Panc1 (cell line): ENCODE measurements at regions of chr13 and their contacts with region 1.

Region 1: GRCh38 chr13:61286148-61286745 is 129.4 kb downstream of the PCDH20 start:
- DNase-seq: no peak
- ATAC-seq: no peak
- H3K4me3 ChIP-seq: no peak overlapping the region
- H3K27ac ChIP-seq: no peak overlapping the region
- H3K4me1 ChIP-seq: no peaks in the 10 kb centered on the region
- H3K27me3 ChIP-seq: no peaks in the 10 kb centered on the region
- CTCF ChIP-seq: peak; percentile 69

Region 2: GRCh38 chr13:61358599-61358998 is 72.4 kb after region 1 on chr13:
- CTCF ChIA-PET with region 1: no interaction called
- POLR2A ChIA-PET with region 1: no interaction called
- in situ Hi-C with region 1: no loop called
- intact Hi-C with region 1: no loop called
- DNase-seq: no peak
- ATAC-seq: no peak
- H3K4me3 ChIP-seq: no peak overlapping the region
- H3K27ac ChIP-seq: no peak overlapping the region
- H3K4me1 ChIP-seq: no peaks in the 10 kb centered on the region
- H3K27me3 ChIP-seq: no peaks in the 10 kb centered on the region
- CTCF ChIP-seq: no peak

Region 3: DNA sequence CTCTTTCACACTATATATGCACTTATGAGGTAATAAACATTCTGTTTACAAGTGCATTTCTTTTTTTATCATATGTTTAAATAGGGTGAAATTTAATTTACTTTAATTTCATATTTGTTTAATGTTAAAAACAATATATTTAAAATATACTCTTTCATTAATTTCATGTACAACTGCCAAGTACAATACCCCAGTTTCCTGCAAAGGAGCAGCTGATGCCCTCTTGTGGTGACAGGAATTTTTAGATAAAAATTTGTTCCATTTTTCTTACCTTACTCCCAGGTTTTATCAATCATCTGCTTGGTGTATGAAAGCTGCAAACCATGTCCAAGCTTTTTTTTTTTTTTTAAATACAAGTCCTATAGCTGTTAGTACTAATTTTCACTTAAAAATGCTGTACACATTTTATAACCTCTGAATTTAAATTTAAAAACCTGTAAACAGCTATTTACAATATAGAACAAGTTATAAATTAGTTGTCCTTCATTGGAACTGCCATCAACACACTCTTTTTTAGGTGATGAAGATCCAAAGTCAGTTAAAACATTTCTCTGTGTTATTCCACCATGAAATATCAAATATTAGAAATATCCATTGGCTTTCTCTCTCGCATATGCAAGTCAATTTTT is 124.5 kb after region 1 on chr13:
- CTCF ChIA-PET with region 1: interaction called, 4 read pairs
- POLR2A ChIA-PET with region 1: no interaction called
- in situ Hi-C with region 1: no loop called
- intact Hi-C with region 1: loop called (anchors 5 kb)
- DNase-seq: peak; percentile 1
- ATAC-seq: no peak
- H3K4me3 ChIP-seq: no peak overlapping the region
- H3K27ac ChIP-seq: no peak overlapping the region; the same call in 1 of the 2 replicates
- H3K4me1 ChIP-seq: no peaks in the 10 kb centered on the region
- H3K27me3 ChIP-seq: no peaks in the 10 kb centered on the region
- CTCF ChIP-seq: peak; percentile 65; the same call in 1 of the 2 replicates

Region 4: GRCh38 chr13:61954092-61954491 is 667.8 kb after region 1 on chr13:
- CTCF ChIA-PET with region 1: interaction called, 3 read pairs
- POLR2A ChIA-PET with region 1: no interaction called
- in situ Hi-C with region 1: no loop called
- intact Hi-C with region 1: loop called (anchors 5 kb)
- DNase-seq: peak; percentile 12
- ATAC-seq: no peak
- H3K4me3 ChIP-seq: no peak overlapping the region
- H3K27ac ChIP-seq: no peak overlapping the region
- H3K4me1 ChIP-seq: no peaks in the 10 kb centered on the region
- H3K27me3 ChIP-seq: no peaks in the 10 kb centered on the region
- CTCF ChIP-seq: peak; percentile 53; the same call in 1 of the 2 replicates